ENCODE measurements at regions of chr15 and their contacts with region 1.

Region 1: DNA sequence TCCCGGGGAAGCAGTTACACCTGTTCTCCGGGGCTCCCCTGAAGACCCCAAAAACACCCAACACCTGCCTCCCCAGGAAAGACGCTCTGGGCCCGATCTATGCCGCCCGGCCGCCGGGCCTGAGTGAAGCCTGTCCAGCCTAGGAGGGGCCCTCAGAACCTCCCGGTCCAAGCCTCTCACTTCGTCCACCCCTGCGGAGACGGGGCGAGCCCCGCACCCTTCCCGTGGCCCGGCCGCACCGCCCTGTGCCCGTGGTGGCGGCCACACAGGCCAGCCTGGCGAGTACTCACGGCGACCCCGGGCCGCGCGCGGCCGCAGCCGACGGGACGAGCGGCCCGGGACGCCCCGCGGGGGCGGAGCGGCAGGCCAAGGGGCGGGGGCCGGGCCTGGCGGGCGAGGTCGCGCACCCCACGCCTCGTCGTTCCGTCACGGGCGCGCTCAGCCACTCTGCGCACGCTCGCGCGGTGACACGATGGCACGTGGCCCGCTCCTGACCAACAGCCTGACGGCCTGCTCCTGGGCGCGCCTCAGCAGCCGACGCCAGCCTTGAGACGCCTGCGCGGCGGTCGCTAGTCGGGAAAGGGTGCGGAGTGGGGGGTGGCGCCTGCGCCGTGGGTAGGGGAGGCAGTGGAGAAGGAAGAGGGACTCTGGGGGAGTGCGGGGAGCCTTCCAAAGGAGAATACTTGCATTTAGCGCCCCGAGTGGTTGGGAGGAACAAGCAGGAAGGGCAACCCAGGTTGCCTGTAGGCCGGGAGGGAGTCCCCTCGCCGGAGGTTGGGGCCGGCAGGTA is at the start of gene PARP6:
- DNase-seq: peak; percentile 98
- ATAC-seq: peak; percentile 98
- H3K4me3 Mint-ChIP-seq: peak within 1 kb of the TSS; percentile 87
- H3K27ac Mint-ChIP-seq: peak within 1 kb of the TSS; percentile 91
- H3K4me1 Mint-ChIP-seq: peaks cover 36% of the 10 kb centered on the region
- H3K27me3 Mint-ChIP-seq: no peaks in the 10 kb centered on the region
- CTCF ChIP-seq: peak; percentile 56
- total RNA-seq, gene PARP6: 48.7 to 50.1 TPM

Region 2: DNA sequence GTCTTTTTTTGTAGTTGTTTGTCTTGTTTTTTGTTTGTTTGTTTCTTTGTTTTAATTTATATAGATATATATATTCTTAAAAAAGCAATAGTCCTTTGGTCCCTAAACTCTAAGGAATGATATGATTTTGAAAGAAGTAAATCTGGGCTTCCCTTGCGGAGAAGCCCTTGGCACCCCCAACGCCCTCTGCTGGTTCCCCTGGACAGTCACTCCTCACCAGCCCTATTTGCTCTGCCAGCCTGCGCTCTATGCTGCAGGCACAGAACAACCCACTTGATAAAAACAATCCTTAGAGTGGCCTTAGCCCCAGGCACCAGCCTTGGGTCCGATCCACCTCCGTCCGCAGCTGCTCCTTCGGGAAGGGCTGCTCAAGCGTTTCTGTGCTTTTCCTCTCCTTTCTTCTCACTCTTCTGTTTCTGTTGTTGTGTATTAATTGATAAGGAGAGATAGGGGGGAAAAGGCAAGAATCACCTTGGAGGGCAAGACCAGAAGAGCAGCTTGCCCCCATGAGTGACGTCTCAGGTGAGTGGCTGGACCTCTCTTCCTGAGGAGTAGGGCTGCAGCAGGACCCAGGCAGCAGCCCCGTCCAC is 13.6 kb after region 1 on chr15:
- CTCF ChIA-PET with region 1: interaction called, 22 read pairs
- POLR2A ChIA-PET with region 1: interaction called, 4 read pairs
- intact Hi-C with region 1: no loop called
- DNase-seq: peak; percentile 56
- ATAC-seq: peak; percentile 72
- H3K4me3 Mint-ChIP-seq: no peak overlapping the region
- H3K27ac Mint-ChIP-seq: no peak overlapping the region
- H3K4me1 Mint-ChIP-seq: peaks cover 4% of the 10 kb centered on the region
- H3K27me3 Mint-ChIP-seq: no peaks in the 10 kb centered on the region
- CTCF ChIP-seq: peak; percentile 66

Region 3: GRCh38 chr15:72319985-72320671 is 47.7 kb after region 1 on chr15 and contains the start of gene CELF6:
- CTCF ChIA-PET with region 1: no interaction called
- POLR2A ChIA-PET with region 1: no interaction called
- intact Hi-C with region 1: no loop called
- DNase-seq: peak; percentile 82
- ATAC-seq: peak; percentile 81
- H3K4me3 Mint-ChIP-seq: peak within 1 kb of the TSS; percentile 73
- H3K27ac Mint-ChIP-seq: peak within 1 kb of the TSS; percentile 10
- H3K4me1 Mint-ChIP-seq: peaks cover 11% of the 10 kb centered on the region
- H3K27me3 Mint-ChIP-seq: peaks cover 11% of the 10 kb centered on the region
- CTCF ChIP-seq: no peak
- total RNA-seq, gene CELF6: 0.18 to 0.20 TPM

Region 4: DNA sequence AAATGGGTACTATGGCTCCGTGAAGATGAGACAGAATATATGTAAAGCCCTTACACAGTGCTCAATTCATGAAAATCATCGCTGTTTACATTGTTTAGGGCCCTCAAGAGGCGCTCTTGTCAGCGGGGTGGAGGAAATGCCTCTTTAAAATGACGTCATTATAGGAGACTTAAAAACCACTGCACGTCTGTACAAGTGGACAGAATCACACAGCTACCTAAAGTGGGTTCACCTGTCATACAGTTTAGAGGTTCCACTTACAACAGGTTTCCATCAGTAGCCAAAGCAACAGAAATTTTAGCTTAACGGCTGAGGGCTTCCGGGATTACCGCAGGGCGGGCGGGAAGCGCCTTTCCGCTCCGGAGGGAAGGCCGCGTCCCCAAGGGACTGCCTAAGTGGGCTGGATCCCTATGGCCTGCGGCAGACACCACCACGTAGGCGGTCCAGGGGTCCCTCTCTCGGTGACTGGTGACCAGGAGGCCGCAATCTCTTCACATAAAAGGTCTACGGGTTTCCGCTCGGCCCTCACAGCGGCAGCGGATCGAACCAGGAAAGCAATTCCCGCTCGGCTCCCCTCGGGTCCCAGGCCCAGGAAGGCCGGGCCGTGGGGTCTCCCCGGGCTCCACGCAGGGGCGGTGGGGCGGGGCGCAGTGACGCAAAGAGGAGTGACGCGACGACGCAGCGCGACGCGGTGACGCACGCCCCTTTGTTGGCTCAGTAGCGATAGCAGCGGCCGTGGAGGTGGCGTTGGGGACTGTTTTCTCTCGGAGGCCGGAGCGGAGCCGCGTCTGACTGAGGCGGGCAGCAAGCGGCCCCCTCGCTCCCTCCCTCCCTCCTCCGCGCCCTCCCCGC is 201.4 kb after region 1 on chr15 and contains the start of gene ARIH1:
- CTCF ChIA-PET with region 1: no interaction called
- POLR2A ChIA-PET with region 1: no interaction called
- intact Hi-C with region 1: no loop called
- DNase-seq: peak; percentile 95
- ATAC-seq: peak; percentile 78
- H3K4me3 Mint-ChIP-seq: peak within 1 kb of the TSS; percentile 97
- H3K27ac Mint-ChIP-seq: peak within 1 kb of the TSS; percentile 87
- H3K4me1 Mint-ChIP-seq: peaks cover 31% of the 10 kb centered on the region
- H3K27me3 Mint-ChIP-seq: no peaks in the 10 kb centered on the region
- CTCF ChIP-seq: no peak
- total RNA-seq, gene ARIH1: 170 to 175 TPM

Region 5: GRCh38 chr15:72487070-72487797 is 214.8 kb after region 1 on chr15:
- CTCF ChIA-PET with region 1: no interaction called
- POLR2A ChIA-PET with region 1: no interaction called
- intact Hi-C with region 1: no loop called
- DNase-seq: no peak
- ATAC-seq: no peak
- H3K4me3 Mint-ChIP-seq: no peak overlapping the region
- H3K27ac Mint-ChIP-seq: peak overlapping the region; percentile 10
- H3K4me1 Mint-ChIP-seq: peaks cover 67% of the 10 kb centered on the region
- H3K27me3 Mint-ChIP-seq: no peaks in the 10 kb centered on the region
- CTCF ChIP-seq: no peak